Sciatic nerve (tissue), 2 donors: ENCODE measurements at regions of chr12 and their contacts with region 1.

Region 1: GRCh38 chr12:57012600-57013465 is 3.5 kb downstream of the TAC3 start:
- DNase-seq: peak; percentile 34
- ATAC-seq: no peak

Region 2: GRCh38 chr12:55673638-55674037 is 1339.2 kb before region 1 on chr12:
- intact Hi-C with region 1: no loop called
- DNase-seq: no peak
- ATAC-seq: peak; percentile 33

Region 3: GRCh38 chr12:56947633-56948456 is 65.0 kb before region 1 on chr12:
- intact Hi-C with region 1: no loop called
- DNase-seq: no peak
- ATAC-seq: no peak

Region 4: DNA sequence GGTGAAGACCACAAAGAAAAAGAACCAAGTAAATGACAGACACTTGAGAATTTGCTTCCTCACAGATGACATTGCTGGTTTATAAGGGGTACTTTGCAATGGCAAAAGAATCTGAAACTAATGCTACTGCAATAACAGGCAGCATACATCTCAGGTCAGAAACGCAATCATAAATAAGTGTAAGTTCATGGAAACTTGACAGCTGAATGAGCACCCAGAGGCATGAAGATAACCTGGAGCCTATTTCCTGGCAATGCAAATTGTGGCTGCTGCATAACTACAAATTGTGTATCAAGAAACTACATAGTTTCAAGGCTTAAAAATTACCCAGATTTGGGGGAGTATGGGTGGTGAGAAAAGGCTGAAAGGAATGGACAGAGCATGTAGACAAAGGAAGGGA is 45.6 kb after region 1 on chr12:
- intact Hi-C with region 1: loop called (anchors 5 kb)
- DNase-seq: no peak
- ATAC-seq: no peak

Region 5: DNA sequence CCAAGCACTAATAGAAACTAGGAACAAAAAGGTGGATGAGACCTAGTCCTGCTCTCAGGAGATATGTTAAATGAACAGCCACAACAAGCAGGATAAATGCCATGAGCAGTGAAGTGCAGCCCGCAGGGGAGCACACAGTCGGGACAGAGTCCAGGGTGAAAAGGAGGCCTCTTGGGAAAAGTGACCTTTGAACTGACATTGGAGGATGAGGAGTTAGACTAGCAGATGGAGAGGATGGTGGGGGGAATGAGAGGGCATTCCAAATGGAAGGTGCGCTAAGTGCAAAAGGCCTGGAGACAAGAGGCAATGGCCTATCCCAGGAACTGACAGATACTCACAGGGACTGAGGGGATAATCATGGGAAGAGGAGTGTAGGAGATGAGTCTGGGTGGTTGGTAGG is 685.6 kb after region 1 on chr12:
- intact Hi-C with region 1: no loop called
- DNase-seq: no peak
- ATAC-seq: no peak